Sciatic nerve (tissue), 2 donors: ENCODE measurements at regions of chr5 and their contacts with region 1.

Region 1: GRCh38 chr5:13454050-13454449 is 490.4 kb downstream of the DNAH5 start:
- DNase-seq: no peak
- ATAC-seq: no peak

Region 2: DNA sequence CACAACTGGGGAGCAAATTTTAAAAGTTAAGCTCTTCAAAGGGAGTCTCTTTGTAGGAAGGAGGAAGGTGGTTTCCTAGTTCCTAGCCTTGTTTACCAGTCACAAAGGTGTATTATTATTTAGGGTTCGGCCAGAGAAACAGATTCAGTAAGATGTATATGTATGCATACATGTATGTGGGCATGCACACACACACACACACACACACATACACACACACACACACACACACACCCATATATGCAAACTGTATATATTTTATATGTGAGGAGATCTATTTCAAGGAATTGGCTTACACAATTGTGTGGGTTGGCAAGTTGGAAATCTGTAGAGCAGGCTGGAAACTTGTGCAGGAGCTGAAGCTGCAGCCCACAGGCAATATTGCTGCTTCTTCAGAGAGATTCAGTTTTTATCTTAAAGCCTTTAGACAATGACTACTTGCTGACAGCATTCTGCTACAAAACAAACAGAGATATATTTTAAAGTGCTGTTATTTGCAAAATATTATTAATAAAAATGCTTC is 565.8 kb after region 1 on chr5:
- intact Hi-C with region 1: loop called (anchors 5 kb)
- DNase-seq: no peak
- ATAC-seq: no peak